Endothelial cell of umbilical vein (primary cell): ENCODE measurements at regions of chr9 and their contacts with region 1.

Region 1: GRCh38 chr9:99104459-99105151 is at the start of gene TGFBR1:
- DNase-seq: peak; percentile 92
- H3K4me3 ChIP-seq: peak within 1 kb of the TSS; percentile 42 to 84 (median 57)
- H3K27ac ChIP-seq: peak within 1 kb of the TSS; percentile 38
- H3K4me1 ChIP-seq: peaks cover 13% of the 10 kb centered on the region
- H3K27me3 ChIP-seq: no peaks in the 10 kb centered on the region
- CTCF ChIP-seq: no peak
- POLR2A ChIP-seq: no peak
- total RNA-seq, gene TGFBR1: 17.7 and 18.6 TPM in 2 replicates

Region 2: GRCh38 chr9:99030092-99030511 is 74.5 kb before region 1 on chr9:
- CTCF ChIA-PET with region 1: no interaction called
- POLR2A ChIA-PET with region 1: no interaction called
- dilution Hi-C with region 1: no loop called
- intact Hi-C with region 1: no loop called
- DNase-seq: no peak
- H3K4me3 ChIP-seq: no peak overlapping the region
- H3K27ac ChIP-seq: no peak overlapping the region
- H3K4me1 ChIP-seq: no peaks in the 10 kb centered on the region
- H3K27me3 ChIP-seq: peaks cover 0 to 4% of the 10 kb centered on the region in 2 experiments
- CTCF ChIP-seq: no peak
- POLR2A ChIP-seq: no peak

Region 3: DNA sequence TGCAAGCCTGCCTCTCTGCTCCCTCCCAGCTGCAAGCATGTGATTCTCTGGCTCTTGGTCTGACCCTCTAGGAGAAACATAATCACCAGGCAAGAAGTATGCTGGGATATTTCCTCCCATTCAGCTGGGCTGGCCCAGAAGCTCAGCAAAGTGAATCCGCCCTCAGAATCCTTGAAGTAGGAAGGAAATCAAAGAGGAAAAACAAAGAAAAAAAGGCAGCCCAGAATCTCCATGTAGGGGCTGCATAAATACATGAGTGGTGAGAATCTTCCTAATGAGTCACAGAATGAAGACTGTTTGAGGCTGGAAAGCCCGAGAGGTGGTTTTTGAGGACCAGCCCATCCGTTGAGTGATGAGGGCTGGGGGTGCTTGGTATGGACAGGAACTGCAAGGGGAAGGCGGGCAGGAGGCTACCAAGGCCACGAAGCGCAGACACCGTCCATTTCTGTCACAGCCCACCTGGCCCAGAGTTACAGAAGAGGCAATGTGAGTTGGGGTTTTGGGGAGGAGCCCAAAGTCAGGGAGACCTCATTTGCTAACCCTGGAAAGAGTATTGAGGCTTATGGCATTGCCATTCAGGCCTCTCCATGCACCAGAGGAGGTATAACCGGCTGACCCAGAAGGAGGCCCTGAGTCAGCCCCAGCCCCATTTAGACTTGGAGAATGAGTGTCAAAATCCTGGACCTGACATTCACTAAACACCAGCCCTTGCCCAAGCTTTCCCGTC is 33.1 kb before region 1 on chr9:
- CTCF ChIA-PET with region 1: no interaction called
- POLR2A ChIA-PET with region 1: no interaction called
- dilution Hi-C with region 1: no loop called
- intact Hi-C with region 1: loop called (anchors 2 kb)
- DNase-seq: peak; percentile 55
- H3K4me3 ChIP-seq: no peak overlapping the region
- H3K27ac ChIP-seq: no peak overlapping the region
- H3K4me1 ChIP-seq: no peaks in the 10 kb centered on the region
- H3K27me3 ChIP-seq: no peaks in the 10 kb centered on the region
- CTCF ChIP-seq: no peak
- POLR2A ChIP-seq: no peak

Region 4: GRCh38 chr9:99085949-99086948 is 18.4 kb before region 1 on chr9:
- CTCF ChIA-PET with region 1: interaction called, 5 read pairs
- POLR2A ChIA-PET with region 1: no interaction called
- dilution Hi-C with region 1: no loop called
- intact Hi-C with region 1: loop called (anchors 2 kb)
- DNase-seq: peak; percentile 7
- H3K4me3 ChIP-seq: no peak overlapping the region
- H3K27ac ChIP-seq: no peak overlapping the region
- H3K4me1 ChIP-seq: no peaks in the 10 kb centered on the region
- H3K27me3 ChIP-seq: peaks cover 0 to 2% of the 10 kb centered on the region in 2 experiments
- CTCF ChIP-seq: no peak
- POLR2A ChIP-seq: no peak